Posterior vena cava (tissue), 2 donors: ENCODE measurements at regions of chr4 and their contacts with region 1.

Region 1: DNA sequence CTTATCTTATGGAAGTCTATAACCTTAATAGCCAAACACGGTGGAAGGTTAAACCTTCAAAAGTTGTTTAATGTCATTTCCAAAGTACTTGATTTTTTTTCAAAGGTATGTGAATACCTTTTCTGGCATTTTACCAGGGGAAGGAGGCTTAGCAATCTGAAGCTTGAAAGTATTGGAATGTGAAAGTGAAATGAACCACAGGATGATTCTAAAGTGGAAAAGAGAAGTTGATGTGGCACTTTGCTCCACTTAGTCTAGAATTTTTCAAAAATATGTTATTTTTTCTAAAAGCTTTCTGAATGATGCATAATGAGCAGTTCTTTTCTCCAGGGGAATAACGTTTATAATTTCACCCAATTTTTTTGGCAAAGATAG is 19.2 kb downstream of the PI4K2B start:
- DNase-seq: no peak

Region 2: GRCh38 chr4:25213347-25213979 is 39.6 kb before region 1 on chr4:
- intact Hi-C with region 1: no loop called
- DNase-seq: no peak

Region 3: DNA sequence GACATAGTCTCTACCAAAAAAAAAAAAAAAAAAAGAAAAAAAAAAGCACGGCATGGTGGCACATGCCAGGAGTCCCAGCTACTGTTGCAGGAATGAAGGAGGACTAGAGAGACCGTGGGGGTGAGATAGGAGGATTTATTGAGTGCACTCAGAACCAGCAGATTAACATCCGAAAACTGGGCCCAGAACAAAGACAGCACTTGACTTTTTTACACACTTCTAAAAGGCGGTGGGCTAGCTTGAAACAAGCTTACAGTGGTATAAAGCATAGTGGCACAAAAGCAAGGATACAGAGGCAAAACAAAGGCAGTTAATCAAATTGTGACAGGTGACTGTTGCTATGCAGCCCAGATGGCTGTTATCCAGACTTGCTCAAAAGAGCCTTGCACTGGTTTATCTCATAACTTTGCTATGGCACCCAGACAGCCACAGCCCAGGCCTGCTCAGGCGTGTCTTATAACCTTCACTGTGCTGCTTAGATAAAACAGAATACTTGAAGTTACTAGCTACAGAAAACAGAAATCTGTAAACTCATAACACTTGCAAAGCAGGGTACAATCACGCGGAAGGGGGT is 29.2 kb before region 1 on chr4:
- intact Hi-C with region 1: loop called in 1 of 2 experiments (anchors 1 kb)
- DNase-seq: no peak

Region 4: DNA sequence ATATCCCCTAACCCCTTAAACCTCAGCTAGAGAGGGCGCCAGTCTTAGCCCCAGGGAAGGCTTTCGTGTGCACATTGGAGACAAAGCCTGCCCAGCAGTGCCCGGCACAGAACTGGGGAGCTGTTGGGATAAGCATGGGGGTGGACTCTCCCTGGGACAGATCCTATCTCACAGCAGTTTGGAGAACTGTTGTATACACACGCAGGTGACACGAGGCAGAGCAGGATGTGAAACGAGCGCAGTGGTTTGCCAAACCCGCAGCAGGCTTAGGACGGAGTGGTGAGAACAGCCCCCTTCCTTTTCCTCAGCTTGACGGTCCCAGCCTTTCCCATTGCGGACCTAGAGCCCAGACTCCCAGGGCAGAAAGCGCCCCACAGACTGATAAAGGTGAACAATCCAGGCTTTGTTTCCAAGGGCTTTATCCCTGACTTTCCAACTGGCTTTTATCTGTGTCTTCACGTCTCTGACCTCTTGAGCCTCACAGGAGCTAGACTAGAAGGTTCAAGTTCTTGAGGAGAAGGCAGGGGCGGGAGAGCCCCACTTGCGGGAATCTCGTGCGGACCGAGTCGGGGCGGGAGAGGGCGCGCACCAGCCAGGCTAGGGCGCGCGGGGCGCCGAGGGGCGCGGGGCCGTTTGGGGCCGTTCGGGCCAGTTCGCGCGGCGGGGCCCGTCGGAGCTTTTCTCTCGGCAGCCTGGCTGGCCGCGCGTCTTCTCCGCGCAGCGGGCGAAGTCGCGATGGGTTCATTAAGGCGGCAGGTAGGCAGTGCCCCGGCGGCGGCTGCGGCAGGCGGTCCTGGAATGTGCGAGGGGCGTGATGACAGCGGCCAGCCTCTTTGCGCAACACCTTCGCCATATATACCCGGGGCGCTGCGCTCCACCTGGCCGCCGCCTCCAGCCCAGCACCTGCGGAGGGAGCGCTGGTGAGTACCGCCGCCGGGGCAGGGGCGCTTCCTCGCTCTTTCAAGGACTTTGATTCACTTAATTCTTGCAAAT is 402.2 kb after region 1 on chr4 and contains the start of gene SLC34A2:
- intact Hi-C with region 1: no loop called
- DNase-seq: peak; percentile 34
- total RNA-seq, gene SLC34A2: 0.19 TPM in 1 of 2 donors, not detected in the other